ENCODE measurements at regions of chr12 and their contacts with region 1.

Region 1: GRCh38 chr12:68865399-68866164 is 57.6 kb downstream of the MDM2 start:
- DNase-seq: no peak
- ATAC-seq: no peak
- H3K4me3 Mint-ChIP-seq: no peak overlapping the region
- H3K27ac Mint-ChIP-seq: peak overlapping the region; percentile 19
- H3K4me1 Mint-ChIP-seq: peaks cover 8% of the 10 kb centered on the region
- H3K27me3 Mint-ChIP-seq: no peaks in the 10 kb centered on the region

Region 2: DNA sequence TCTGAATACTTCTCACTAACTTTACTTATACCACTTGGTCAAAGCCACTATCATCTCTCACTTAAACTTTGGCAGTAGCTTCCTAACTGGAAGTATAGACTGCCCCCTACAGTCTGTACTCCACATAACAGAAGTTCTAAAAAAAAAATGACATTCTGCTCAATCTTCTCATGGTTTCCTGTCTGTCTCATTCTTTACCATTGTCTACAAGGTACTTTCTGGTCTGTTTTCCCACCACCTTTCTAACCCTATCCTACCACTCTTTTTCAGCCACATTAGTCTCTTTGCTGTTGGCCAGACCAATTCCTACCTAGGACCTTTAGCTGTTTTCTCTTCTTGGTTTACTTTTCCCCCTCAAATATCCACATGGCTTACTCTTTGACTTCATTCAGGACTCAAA is 388.5 kb after region 1 on chr12:
- CTCF ChIA-PET with region 1: no interaction called
- POLR2A ChIA-PET with region 1: no interaction called
- intact Hi-C with region 1: loop called in 1 of 2 experiments (anchors 5 kb)
- DNase-seq: no peak
- ATAC-seq: peak; percentile 91
- H3K4me3 Mint-ChIP-seq: no peak overlapping the region
- H3K27ac Mint-ChIP-seq: peak overlapping the region; percentile 59
- H3K4me1 Mint-ChIP-seq: peaks cover 37% of the 10 kb centered on the region
- H3K27me3 Mint-ChIP-seq: no peaks in the 10 kb centered on the region